Breast epithelium (tissue), 4 donors: ENCODE measurements at regions of chr3 and their contacts with region 1.

Region 1: DNA sequence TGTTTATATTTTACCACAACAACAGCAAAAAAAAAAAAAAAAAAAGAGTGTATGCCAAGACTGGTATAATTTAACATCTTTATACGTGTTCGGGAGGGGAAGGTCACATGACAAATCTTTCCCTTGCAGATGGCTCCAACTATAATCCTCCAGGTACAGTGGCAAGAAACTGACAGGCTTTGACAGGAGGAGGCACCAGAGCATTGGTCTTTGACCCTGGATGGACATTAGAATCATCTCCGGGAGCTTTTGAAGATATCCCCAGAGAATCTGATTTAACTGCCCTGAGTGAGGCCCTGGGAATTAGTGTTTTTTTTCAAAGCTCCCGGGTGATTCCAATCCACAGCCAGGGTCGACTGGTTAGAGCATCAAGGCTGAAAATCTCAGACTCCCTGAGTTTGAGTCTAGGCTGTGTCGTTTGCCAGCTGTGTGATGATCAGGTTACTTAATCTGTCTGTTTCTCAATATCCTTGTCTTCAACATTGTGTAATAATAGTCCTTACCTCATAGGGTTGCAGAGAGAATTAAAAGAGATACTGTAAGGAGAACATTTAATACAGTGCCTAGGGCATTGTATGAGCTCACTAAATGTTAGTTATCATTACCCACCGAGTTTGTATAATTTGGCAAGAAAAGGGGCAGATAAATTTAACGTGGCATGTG is 8.9 kb upstream of the SEMA5B start:
- DNase-seq: no peak
- H3K4me3 ChIP-seq: no peak overlapping the region
- H3K27ac ChIP-seq: no peak overlapping the region
- H3K4me1 ChIP-seq: no peaks in the 10 kb centered on the region
- H3K27me3 ChIP-seq: no peaks in the 10 kb centered on the region
- CTCF ChIP-seq: no peak
- POLR2A ChIP-seq: no peak

Region 2: GRCh38 chr3:122642935-122643334 is 393.5 kb before region 1 on chr3:
- intact Hi-C with region 1: loop called (anchors 10 kb)
- DNase-seq: no peak
- H3K4me3 ChIP-seq: no peak overlapping the region
- H3K27ac ChIP-seq: no peak overlapping the region
- H3K4me1 ChIP-seq: no peaks in the 10 kb centered on the region
- H3K27me3 ChIP-seq: no peaks in the 10 kb centered on the region
- CTCF ChIP-seq: no peak
- POLR2A ChIP-seq: no peak